ENCODE measurements at regions of chr16 and their contacts with region 1.

Region 1: GRCh38 chr16:84532291-84532724 is 27.8 kb upstream of the MEAK7 start:
- DNase-seq: peak; percentile 93
- H3K4me3 ChIP-seq: no peak overlapping the region
- H3K27ac ChIP-seq: peak overlapping the region; percentile 78
- H3K4me1 ChIP-seq: peaks cover 30% of the 10 kb centered on the region
- H3K27me3 ChIP-seq: no peaks in the 10 kb centered on the region
- CTCF ChIP-seq: no peak
- POLR2A ChIP-seq: peak; percentile 20

Region 2: GRCh38 chr16:84504420-84505248 is 27.7 kb before region 1 on chr16 and contains the start of gene MEAK7:
- CTCF ChIA-PET with region 1: interaction called, 73 read pairs
- POLR2A ChIA-PET with region 1: no interaction called
- dilution Hi-C with region 1: no loop called
- intact Hi-C with region 1: no loop called
- DNase-seq: peak; percentile 98
- H3K4me3 ChIP-seq: peak within 1 kb of the TSS; percentile 61 to 81 (median 62)
- H3K27ac ChIP-seq: peak within 1 kb of the TSS; percentile 38
- H3K4me1 ChIP-seq: peaks cover 10% of the 10 kb centered on the region
- H3K27me3 ChIP-seq: no peaks in the 10 kb centered on the region
- CTCF ChIP-seq: no peak
- POLR2A ChIP-seq: no peak
- total RNA-seq, gene MEAK7: 19.3 and 22.7 TPM in 2 replicates

Region 3: GRCh38 chr16:84548971-84549844 is 16.9 kb after region 1 on chr16:
- CTCF ChIA-PET with region 1: interaction called, 4 read pairs
- POLR2A ChIA-PET with region 1: no interaction called
- dilution Hi-C with region 1: no loop called
- intact Hi-C with region 1: loop called (anchors 2 kb)
- DNase-seq: peak; percentile 62
- H3K4me3 ChIP-seq: no peak overlapping the region
- H3K27ac ChIP-seq: peak overlapping the region; percentile 78
- H3K4me1 ChIP-seq: peaks cover 18% of the 10 kb centered on the region
- H3K27me3 ChIP-seq: no peaks in the 10 kb centered on the region
- CTCF ChIP-seq: no peak
- POLR2A ChIP-seq: peak; percentile 34

Region 4: GRCh38 chr16:84819644-84820324 is 287.5 kb after region 1 on chr16 and contains the start of gene CRISPLD2:
- CTCF ChIA-PET with region 1: no interaction called
- POLR2A ChIA-PET with region 1: no interaction called
- dilution Hi-C with region 1: no loop called
- intact Hi-C with region 1: no loop called
- DNase-seq: peak; percentile 86
- H3K4me3 ChIP-seq: peak within 1 kb of the TSS in 2 of 3 experiments; percentile 24 to 37
- H3K27ac ChIP-seq: no peak within 1 kb of the TSS
- H3K4me1 ChIP-seq: peaks cover 4% of the 10 kb centered on the region
- H3K27me3 ChIP-seq: peaks cover 6 to 11% of the 10 kb centered on the region in 2 experiments
- CTCF ChIP-seq: no peak
- POLR2A ChIP-seq: no peak
- total RNA-seq, gene CRISPLD2: 0.73 TPM in 1 of 2 replicates, not detected in the other

Region 5: GRCh38 chr16:85055503-85056210 is 523.3 kb after region 1 on chr16:
- CTCF ChIA-PET with region 1: no interaction called
- POLR2A ChIA-PET with region 1: no interaction called
- dilution Hi-C with region 1: no loop called
- intact Hi-C with region 1: no loop called
- DNase-seq: peak; percentile 72
- H3K4me3 ChIP-seq: peak overlapping the region in 1 of 3 experiments; percentile 47
- H3K27ac ChIP-seq: peak overlapping the region; percentile 5
- H3K4me1 ChIP-seq: peaks cover 9% of the 10 kb centered on the region
- H3K27me3 ChIP-seq: no peaks in the 10 kb centered on the region
- CTCF ChIP-seq: no peak
- POLR2A ChIP-seq: no peak